ENCODE measurements at regions of chr12 and their contacts with region 1.

Region 1: DNA sequence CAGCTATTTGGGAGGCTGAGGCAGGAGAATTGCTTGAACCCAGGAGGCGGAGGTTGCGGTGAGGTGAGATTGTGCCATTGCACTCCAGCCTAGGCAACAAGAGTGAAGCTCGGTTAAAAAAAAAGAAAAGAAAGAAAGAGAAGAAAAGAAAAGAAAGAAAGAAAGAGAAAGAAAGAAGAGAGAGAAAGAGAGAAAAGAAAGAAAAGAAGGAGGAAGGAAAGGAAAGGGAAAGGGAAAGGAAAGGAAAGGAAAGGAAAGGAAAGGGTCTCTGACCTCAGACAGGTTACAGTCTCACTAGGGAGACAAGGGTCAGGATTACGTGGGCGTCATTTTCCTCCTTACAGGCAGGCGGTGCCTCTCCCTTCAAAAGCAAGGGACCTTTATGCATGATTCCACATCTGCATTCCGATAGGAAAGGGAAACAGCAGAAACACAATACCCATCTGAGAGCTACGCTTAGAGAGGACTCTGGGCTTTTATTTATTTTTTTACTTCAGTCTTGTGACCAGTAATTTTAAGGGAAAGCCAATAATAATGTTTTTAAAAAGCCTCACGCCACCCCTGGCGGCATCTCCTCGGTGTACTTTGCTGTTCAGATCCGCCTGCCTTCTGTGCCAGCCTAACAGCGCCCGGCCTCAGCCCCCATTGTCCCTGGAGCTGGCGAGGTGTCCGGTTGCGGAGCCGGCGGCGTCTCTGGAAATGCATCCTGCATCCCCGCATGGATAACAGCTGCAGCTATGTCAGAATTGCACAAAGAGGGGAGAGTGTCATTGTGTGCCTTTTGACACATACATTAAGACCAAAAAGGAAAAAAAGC is 945 bp upstream of the HIP1R start:
- DNase-seq: peak; percentile 74
- ATAC-seq: peak; percentile 49
- H3K4me3 ChIP-seq: peak overlapping the region; percentile 80
- H3K27ac ChIP-seq: peak overlapping the region; percentile 33
- H3K4me1 ChIP-seq: peaks cover 32% of the 10 kb centered on the region
- H3K27me3 ChIP-seq: no peaks in the 10 kb centered on the region
- CTCF ChIP-seq: peak; percentile 42; the same call in 1 of the 2 replicates

Region 2: DNA sequence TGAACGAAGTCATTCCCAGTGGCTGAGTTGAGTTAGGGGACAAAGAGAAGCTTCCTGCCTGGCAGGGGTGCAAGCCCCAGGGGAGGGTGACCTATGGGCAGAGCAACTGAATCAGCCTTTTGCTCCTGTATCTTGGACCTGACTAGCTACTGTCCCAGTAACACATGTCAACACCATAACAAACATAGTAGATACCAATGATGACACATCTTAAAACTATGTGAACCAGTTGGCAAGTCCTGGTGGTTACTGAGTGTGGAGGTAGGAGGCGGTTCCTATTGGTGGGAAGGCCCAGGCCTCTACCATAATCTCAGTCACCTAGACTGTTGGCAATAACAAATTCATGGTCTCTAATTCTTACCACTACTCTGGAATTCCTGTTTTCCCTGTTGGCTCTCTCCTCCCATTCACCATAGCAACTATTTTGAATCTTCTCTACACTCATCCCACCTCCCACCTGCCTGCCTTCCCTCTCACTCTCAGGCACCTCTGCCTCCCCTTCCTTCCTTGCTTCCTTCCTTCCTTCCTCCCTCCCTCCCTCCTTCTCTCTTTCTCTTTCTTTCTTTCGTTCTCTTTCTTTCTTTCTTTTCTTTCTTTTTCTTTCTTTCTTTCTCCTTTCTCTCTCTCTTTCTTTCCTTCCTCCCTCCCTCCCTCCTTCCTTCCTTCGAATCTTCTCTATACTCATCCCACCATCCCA is 1709.8 kb before region 1 on chr12:
- CTCF ChIA-PET with region 1: no interaction called
- POLR2A ChIA-PET with region 1: interaction called, 17 read pairs
- intact Hi-C with region 1: no loop called
- DNase-seq: peak; percentile 99
- ATAC-seq: peak; percentile 99
- H3K4me3 ChIP-seq: no peak overlapping the region
- H3K27ac ChIP-seq: peak overlapping the region; percentile 77
- H3K4me1 ChIP-seq: peaks cover 18% of the 10 kb centered on the region
- H3K27me3 ChIP-seq: no peaks in the 10 kb centered on the region
- CTCF ChIP-seq: no peak

Region 3: GRCh38 chr12:122767691-122768090 is 66.6 kb before region 1 on chr12:
- CTCF ChIA-PET with region 1: no interaction called
- POLR2A ChIA-PET with region 1: no interaction called
- intact Hi-C with region 1: loop called (anchors 10 kb)
- DNase-seq: no peak
- ATAC-seq: no peak
- H3K4me3 ChIP-seq: no peak overlapping the region
- H3K27ac ChIP-seq: no peak overlapping the region
- H3K4me1 ChIP-seq: no peaks in the 10 kb centered on the region
- H3K27me3 ChIP-seq: no peaks in the 10 kb centered on the region
- CTCF ChIP-seq: no peak

Region 4: DNA sequence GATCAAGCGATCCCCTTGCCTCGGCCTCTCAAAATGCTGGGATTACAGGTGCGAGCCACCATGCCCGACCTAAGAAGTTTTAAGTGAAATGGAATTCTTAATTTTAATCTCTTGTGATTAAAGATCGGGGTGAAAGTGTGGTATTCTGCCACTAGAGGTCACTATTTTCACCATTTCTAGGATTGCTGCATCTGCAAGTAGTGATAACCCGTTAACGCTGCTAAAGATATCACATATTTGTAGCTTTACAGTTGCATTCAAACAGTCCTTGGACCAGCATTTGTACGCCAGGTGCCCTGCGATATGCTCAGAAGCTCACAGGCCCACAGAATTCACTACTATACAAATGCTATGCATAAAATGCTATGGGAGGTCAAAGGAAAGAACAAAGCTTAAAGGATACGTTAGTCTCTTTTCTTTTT is 40.6 kb before region 1 on chr12:
- CTCF ChIA-PET with region 1: interaction called, 5 read pairs
- POLR2A ChIA-PET with region 1: no interaction called
- intact Hi-C with region 1: loop called (anchors 2 kb)
- DNase-seq: peak; percentile 76
- ATAC-seq: peak; percentile 86
- H3K4me3 ChIP-seq: no peak overlapping the region
- H3K27ac ChIP-seq: no peak overlapping the region
- H3K4me1 ChIP-seq: peaks cover under 1% of the 10 kb centered on the region; the same call in 1 of the 2 replicates
- H3K27me3 ChIP-seq: no peaks in the 10 kb centered on the region
- CTCF ChIP-seq: peak; percentile 88

Region 5: GRCh38 chr12:122851820-122852219 is 17.5 kb after region 1 on chr12:
- CTCF ChIA-PET with region 1: no interaction called
- POLR2A ChIA-PET with region 1: no interaction called
- intact Hi-C with region 1: no loop called
- DNase-seq: peak; percentile 94
- ATAC-seq: peak; percentile 96
- H3K4me3 ChIP-seq: no peak overlapping the region
- H3K27ac ChIP-seq: peak overlapping the region; percentile 62
- H3K4me1 ChIP-seq: peaks cover 15% of the 10 kb centered on the region
- H3K27me3 ChIP-seq: no peaks in the 10 kb centered on the region
- CTCF ChIP-seq: no peak

Region 6: DNA sequence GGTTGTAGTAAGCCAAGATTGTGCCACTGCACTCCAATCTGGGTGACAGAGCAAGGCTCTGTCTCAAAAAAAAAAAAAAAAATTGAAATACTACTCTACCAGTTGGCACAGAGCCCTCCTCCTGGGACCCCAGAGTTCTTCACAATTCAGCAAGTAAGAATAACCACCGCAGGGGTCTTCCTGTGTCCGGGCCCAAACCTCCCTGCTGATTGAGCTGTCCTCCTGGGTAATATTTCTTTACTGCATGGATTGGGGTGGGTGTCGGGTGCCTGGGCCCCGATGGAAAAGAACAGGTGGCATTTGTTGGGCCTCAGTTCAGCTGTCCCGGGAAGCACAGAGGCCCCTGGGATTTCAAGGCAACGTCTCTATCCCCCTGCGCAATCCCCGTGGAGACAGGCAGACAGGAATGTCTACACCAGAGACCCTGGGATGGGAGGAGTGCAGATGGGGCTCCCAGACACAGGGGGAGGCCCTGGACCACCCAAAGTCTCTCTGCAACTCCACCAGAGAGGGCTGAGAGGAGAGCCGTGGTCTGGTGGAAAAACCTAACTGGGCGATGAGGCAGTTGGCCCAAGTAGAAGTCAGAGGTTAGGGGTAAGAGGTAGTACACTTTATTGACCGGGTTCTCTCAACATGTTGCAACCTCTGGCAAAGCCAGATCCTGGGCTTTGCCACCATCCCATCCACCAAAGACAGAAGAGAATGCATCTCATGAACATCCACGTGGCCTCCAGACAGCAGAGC is 94.3 kb after region 1 on chr12:
- CTCF ChIA-PET with region 1: no interaction called
- POLR2A ChIA-PET with region 1: no interaction called
- intact Hi-C with region 1: no loop called
- DNase-seq: no peak
- ATAC-seq: no peak
- H3K4me3 ChIP-seq: no peak overlapping the region
- H3K27ac ChIP-seq: no peak overlapping the region
- H3K4me1 ChIP-seq: no peaks in the 10 kb centered on the region
- H3K27me3 ChIP-seq: no peaks in the 10 kb centered on the region
- CTCF ChIP-seq: no peak

Region 7: DNA sequence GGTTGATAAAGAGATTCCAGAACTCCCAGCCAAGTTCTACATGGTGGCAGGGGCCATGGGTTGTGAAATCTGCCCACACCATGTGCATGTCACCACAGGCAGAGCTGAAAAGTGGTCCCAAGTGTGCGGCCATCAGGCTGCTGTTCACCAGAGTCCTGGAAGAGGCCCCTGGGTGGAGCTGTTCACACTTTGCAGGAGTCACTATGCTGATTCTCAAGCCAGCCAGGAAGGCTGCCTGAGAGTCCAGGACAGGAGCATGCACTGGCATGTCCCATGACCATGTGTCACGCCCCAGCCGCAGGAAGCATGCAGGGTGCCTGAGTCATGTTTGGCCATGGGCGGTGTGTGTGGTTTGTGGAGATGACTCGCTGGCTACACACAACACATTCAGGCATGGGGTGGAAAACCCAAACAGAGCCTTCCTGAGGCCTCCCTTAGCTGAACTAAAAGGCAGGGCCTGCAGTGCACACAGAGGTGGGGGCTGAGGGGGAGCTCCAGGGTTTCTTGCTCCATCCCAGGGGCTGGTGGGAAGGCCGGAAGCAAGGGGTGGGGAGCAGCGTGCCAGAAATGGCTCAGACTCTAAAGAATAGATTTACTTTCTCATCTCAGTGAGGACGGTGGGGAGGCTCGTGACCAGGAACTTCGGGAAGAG is 112.5 kb after region 1 on chr12:
- CTCF ChIA-PET with region 1: no interaction called
- POLR2A ChIA-PET with region 1: no interaction called
- intact Hi-C with region 1: no loop called
- DNase-seq: peak; percentile 99
- ATAC-seq: peak; percentile 84
- H3K4me3 ChIP-seq: no peak overlapping the region
- H3K27ac ChIP-seq: peak overlapping the region; percentile 94
- H3K4me1 ChIP-seq: peaks cover 65% of the 10 kb centered on the region
- H3K27me3 ChIP-seq: no peaks in the 10 kb centered on the region
- CTCF ChIP-seq: peak; percentile 71

Region 8: GRCh38 chr12:123445388-123446351 is 611.4 kb after region 1 on chr12:
- CTCF ChIA-PET with region 1: no interaction called
- POLR2A ChIA-PET with region 1: no interaction called
- intact Hi-C with region 1: no loop called
- DNase-seq: peak; percentile 67
- ATAC-seq: peak; percentile 82
- H3K4me3 ChIP-seq: no peak overlapping the region
- H3K27ac ChIP-seq: no peak overlapping the region
- H3K4me1 ChIP-seq: peaks cover 12% of the 10 kb centered on the region; the same call in 1 of the 2 replicates
- H3K27me3 ChIP-seq: no peaks in the 10 kb centered on the region
- CTCF ChIP-seq: no peak

Region 9: DNA sequence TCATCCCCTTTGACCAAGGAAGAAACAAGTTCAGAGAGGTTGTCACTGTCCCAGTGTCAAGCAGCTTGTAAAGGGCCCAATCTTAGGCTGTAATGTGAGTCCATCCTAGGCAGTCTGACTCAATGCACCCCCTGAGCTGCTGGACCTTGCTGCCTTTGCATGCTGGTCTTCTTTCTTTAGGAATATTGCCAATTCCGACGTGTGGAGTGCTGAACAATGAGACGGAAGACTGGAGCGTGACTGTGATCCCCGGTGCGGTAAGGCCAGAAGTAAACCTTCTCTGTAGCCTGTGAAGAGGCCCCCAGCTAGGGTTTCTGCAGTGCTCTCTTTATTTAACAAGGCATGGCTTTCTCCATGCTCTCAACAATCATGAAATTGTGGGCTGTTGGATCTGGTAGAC is 837.6 kb after region 1 on chr12:
- CTCF ChIA-PET with region 1: interaction called, 12 read pairs
- POLR2A ChIA-PET with region 1: no interaction called
- intact Hi-C with region 1: no loop called
- DNase-seq: no peak
- ATAC-seq: peak; percentile 7
- H3K4me3 ChIP-seq: peak overlapping the region; percentile 80
- H3K27ac ChIP-seq: no peak overlapping the region
- H3K4me1 ChIP-seq: peaks cover 17% of the 10 kb centered on the region; the same call in 1 of the 2 replicates
- H3K27me3 ChIP-seq: no peaks in the 10 kb centered on the region
- CTCF ChIP-seq: no peak

Measured in PC-3 (cell line).